A673 (cell line): ENCODE measurements at regions of chr3 and their contacts with region 1.

Region 1: DNA sequence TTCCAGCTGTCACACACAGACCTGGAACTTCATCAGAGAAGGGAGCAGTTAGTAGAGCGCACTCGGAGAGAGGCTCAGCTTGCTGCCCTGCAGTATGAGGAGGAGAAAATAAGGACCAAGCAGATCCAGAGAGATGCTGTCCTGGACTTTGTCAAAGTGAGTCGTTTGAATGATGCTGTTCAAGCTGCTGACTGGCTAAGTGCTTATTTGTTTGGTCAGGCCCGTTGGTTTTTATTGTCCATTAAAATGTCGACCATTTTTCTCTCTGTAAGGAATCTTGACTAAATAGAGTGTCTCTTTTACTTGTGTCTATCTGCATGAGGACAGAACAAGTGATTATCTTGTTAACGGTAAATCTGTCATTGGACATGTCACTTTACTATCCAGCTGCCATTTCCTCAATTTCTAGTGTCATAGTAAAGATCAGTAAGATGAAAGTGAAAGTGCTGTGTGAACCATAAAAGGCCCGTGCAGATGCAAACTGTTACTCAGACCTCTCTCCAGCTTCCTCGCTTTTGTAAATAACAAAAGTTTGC is 56.9 kb downstream of the LRCH3 start:
- DNase-seq: peak; percentile 52
- H3K4me3 ChIP-seq: peak overlapping the region; percentile 20
- H3K27ac ChIP-seq: peak overlapping the region; percentile 24
- H3K4me1 ChIP-seq: peaks cover 52% of the 10 kb centered on the region
- H3K27me3 ChIP-seq: no peaks in the 10 kb centered on the region
- CTCF ChIP-seq: no peak

Region 2: DNA sequence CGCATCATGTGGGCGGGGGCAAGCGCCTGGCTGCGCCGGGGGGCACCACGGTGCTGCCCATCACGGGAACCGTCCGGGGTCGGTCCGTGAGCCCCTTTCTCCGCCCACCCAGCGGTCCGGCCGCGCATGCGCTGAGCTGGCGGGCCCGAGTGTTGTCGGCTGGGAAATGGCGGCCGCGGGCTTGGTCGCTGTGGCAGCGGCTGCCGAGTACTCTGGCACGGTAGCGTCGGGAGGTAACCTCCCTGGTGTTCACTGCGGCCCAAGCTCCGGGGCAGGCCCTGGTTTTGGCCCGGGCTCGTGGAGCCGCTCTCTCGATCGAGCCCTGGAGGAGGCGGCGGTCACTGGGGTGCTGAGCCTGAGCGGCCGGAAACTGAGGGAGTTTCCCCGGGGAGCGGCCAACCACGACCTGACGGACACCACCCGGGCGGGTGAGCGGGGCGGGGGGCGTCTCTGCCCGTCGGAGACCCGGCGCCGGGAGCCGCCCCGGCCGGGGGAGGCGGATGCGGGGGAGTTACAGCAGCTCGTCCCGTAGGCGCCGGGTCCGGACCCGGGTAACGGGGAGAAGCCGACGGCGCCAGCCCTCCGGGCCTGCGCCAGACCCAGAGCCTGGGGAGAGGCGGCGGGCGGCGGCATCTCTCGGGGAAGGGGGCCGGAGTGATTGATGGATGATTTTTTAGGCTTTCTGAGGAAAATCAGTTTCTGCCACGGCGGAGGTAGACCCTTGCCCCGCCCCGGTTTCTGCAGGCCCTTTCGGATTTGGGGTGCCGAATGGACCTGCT is 56.6 kb before region 1 on chr3 and contains the start of gene LRCH3:
- CTCF ChIA-PET with region 1: no interaction called
- POLR2A ChIA-PET with region 1: interaction called, 22 read pairs
- intact Hi-C with region 1: no loop called
- DNase-seq: peak; percentile 87
- H3K4me3 ChIP-seq: peak within 1 kb of the TSS; percentile 97
- H3K27ac ChIP-seq: peak within 1 kb of the TSS; percentile 97
- H3K4me1 ChIP-seq: peaks cover 14% of the 10 kb centered on the region
- H3K27me3 ChIP-seq: no peaks in the 10 kb centered on the region
- CTCF ChIP-seq: no peak
- total RNA-seq, gene LRCH3: 67.8 and 71.8 TPM in 2 replicates

Region 3: GRCh38 chr3:197906023-197906849 is 58.3 kb after region 1 on chr3:
- CTCF ChIA-PET with region 1: no interaction called
- POLR2A ChIA-PET with region 1: no interaction called
- intact Hi-C with region 1: no loop called
- DNase-seq: peak; percentile 89
- H3K4me3 ChIP-seq: no peak overlapping the region
- H3K27ac ChIP-seq: no peak overlapping the region
- H3K4me1 ChIP-seq: no peaks in the 10 kb centered on the region
- H3K27me3 ChIP-seq: no peaks in the 10 kb centered on the region
- CTCF ChIP-seq: peak; percentile 94

Region 4: GRCh38 chr3:197989651-197990050 is 141.7 kb after region 1 on chr3:
- CTCF ChIA-PET with region 1: no interaction called
- POLR2A ChIA-PET with region 1: no interaction called
- intact Hi-C with region 1: no loop called
- DNase-seq: no peak
- H3K4me3 ChIP-seq: no peak overlapping the region
- H3K27ac ChIP-seq: no peak overlapping the region
- H3K4me1 ChIP-seq: no peaks in the 10 kb centered on the region
- H3K27me3 ChIP-seq: no peaks in the 10 kb centered on the region
- CTCF ChIP-seq: no peak